A673 (cell line): ENCODE measurements at regions of chr4 and their contacts with region 1.

Region 1: GRCh38 chr4:183256756-183257385 is 63.2 kb downstream of the CLDN22 start:
- DNase-seq: peak; percentile 65
- H3K4me3 ChIP-seq: no peak overlapping the region
- H3K27ac ChIP-seq: no peak overlapping the region
- H3K4me1 ChIP-seq: no peaks in the 10 kb centered on the region
- H3K27me3 ChIP-seq: no peaks in the 10 kb centered on the region
- CTCF ChIP-seq: peak; percentile 73

Region 2: GRCh38 chr4:183074296-183074990 is 182.4 kb before region 1 on chr4:
- CTCF ChIA-PET with region 1: interaction called, 6 read pairs
- POLR2A ChIA-PET with region 1: no interaction called
- intact Hi-C with region 1: loop called (anchors 1 kb)
- DNase-seq: no peak
- H3K4me3 ChIP-seq: no peak overlapping the region
- H3K27ac ChIP-seq: no peak overlapping the region
- H3K4me1 ChIP-seq: peaks cover 25% of the 10 kb centered on the region
- H3K27me3 ChIP-seq: no peaks in the 10 kb centered on the region
- CTCF ChIP-seq: no peak

Region 3: DNA sequence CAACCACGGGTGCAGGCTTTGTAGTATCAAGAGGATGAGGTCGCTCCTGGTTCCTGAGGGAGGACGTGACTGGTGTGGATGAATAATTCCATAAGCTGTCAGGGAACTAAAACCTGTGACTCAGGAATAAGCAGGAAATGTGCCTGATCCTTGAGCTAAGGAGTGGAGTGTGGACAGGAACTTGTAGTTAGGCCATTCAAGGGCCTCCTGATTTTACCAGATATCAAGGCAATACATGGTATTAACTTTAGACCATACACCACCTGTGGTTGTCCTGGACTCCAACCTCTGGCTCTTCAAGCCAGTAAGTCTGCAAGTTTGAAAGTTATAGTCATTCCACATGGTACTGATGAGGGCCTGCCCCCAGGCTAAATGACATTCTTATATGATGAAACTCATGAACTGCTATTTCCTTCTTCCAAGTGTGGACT is 235.9 kb after region 1 on chr4:
- CTCF ChIA-PET with region 1: interaction called, 19 read pairs
- POLR2A ChIA-PET with region 1: no interaction called
- intact Hi-C with region 1: no loop called
- DNase-seq: no peak
- H3K4me3 ChIP-seq: no peak overlapping the region
- H3K27ac ChIP-seq: no peak overlapping the region
- H3K4me1 ChIP-seq: peaks cover 6% of the 10 kb centered on the region
- H3K27me3 ChIP-seq: no peaks in the 10 kb centered on the region
- CTCF ChIP-seq: no peak